ENCODE measurements at regions of chr1 and their contacts with region 1.

Region 1: GRCh38 chr1:66271216-66271903 is 262.6 kb upstream of the SGIP1 start:
- DNase-seq: peak; percentile 88
- H3K4me3 ChIP-seq: peak overlapping the region; percentile 37
- H3K27ac ChIP-seq: peak overlapping the region; percentile 82
- H3K4me1 ChIP-seq: peaks cover 60% of the 10 kb centered on the region
- CTCF ChIP-seq: no peak

Region 2: GRCh38 chr1:65289449-65289848 is 981.9 kb before region 1 on chr1:
- CTCF ChIA-PET with region 1: no interaction called
- POLR2A ChIA-PET with region 1: interaction called, 3 read pairs
- intact Hi-C with region 1: loop called (anchors 10 kb)
- DNase-seq: no peak
- H3K4me3 ChIP-seq: no peak overlapping the region
- H3K27ac ChIP-seq: no peak overlapping the region
- H3K4me1 ChIP-seq: no peaks in the 10 kb centered on the region
- CTCF ChIP-seq: no peak

Region 3: GRCh38 chr1:65317866-65318653 is 953.3 kb before region 1 on chr1:
- CTCF ChIA-PET with region 1: interaction called, 13 read pairs
- POLR2A ChIA-PET with region 1: interaction called, 3 read pairs
- intact Hi-C with region 1: no loop called
- DNase-seq: no peak
- H3K4me3 ChIP-seq: no peak overlapping the region
- H3K27ac ChIP-seq: no peak overlapping the region
- H3K4me1 ChIP-seq: no peaks in the 10 kb centered on the region
- CTCF ChIP-seq: no peak

Region 4: GRCh38 chr1:65419681-65420589 is 851.4 kb before region 1 on chr1:
- CTCF ChIA-PET with region 1: no interaction called
- POLR2A ChIA-PET with region 1: no interaction called
- intact Hi-C with region 1: loop called (anchors 5 kb)
- DNase-seq: peak; percentile 97
- H3K4me3 ChIP-seq: peak overlapping the region; percentile 92
- H3K27ac ChIP-seq: peak overlapping the region; percentile 63
- H3K4me1 ChIP-seq: peaks cover 20% of the 10 kb centered on the region
- CTCF ChIP-seq: no peak

Region 5: DNA sequence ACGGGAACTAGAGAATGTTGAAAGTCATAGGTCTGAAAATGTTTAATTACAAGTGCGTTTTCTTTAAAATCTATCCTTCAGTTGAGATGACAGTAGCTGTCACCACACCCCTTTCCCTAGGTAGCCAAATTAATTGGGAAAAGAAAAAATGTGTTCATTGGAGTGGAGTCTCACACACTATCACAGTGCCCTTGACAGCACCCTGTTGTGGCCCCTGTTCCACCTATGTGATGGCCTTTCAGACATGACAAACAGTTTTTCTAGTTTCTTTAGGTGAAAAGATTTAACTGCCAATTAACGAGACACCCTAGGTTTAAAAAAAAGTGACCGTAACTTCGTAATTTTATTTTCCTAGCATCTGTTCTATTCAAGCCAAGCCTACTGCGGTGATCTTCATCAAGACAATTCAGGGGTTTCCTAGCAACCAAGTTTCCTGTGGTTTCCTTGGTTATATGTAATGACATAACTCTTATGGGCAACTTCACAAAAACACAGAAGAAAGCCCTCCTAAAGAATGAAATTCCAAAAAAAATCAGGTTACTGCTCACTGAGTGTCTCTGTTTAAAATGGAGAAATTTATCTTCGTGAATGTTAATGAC is 180.4 kb before region 1 on chr1:
- CTCF ChIA-PET with region 1: no interaction called
- POLR2A ChIA-PET with region 1: no interaction called
- intact Hi-C with region 1: no loop called
- DNase-seq: no peak
- H3K4me3 ChIP-seq: no peak overlapping the region
- H3K27ac ChIP-seq: no peak overlapping the region
- H3K4me1 ChIP-seq: no peaks in the 10 kb centered on the region
- CTCF ChIP-seq: no peak

Region 6: GRCh38 chr1:66207484-66207883 is 63.9 kb before region 1 on chr1:
- CTCF ChIA-PET with region 1: no interaction called
- POLR2A ChIA-PET with region 1: no interaction called
- intact Hi-C with region 1: no loop called
- DNase-seq: no peak
- H3K4me3 ChIP-seq: no peak overlapping the region
- H3K27ac ChIP-seq: no peak overlapping the region
- H3K4me1 ChIP-seq: no peaks in the 10 kb centered on the region
- CTCF ChIP-seq: no peak

Region 7: DNA sequence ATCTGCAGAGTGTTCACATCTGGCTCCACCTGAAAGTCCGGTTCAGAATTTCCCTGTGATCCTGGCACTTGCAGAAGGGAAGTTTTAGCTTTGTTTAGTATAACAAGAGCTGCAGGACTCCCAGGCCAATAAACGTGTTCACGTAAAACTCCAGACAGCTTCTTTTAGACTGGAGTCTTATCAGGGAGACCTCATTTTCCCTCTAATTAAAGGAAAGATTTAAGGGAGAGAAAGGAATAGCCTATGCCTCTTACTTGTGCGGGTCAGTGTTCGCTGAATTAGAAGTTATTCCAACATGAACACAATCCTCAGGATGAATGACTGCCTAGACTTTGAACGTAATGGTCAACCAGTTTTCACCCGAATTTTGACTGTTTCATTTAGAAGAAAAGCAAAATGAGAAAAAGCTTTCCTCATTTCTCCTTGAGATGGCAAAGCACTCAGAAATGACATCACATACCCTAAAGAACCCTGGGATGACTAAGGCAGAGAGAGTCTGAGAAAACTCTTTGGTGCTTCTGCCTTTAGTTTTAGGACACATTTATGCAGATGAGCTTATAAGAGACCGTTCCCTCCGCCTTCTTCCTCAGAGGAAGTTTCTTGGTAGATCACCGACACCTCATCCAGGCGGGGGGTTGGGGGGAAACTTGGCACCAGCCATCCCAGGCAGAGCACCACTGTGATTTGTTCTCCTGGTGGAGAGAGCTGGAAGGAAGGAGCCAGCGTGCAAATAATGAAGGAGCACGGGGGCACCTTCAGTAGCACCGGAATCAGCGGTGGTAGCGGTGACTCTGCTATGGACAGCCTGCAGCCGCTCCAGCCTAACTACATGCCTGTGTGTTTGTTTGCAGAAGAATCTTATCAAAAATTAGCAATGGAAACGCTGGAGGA is 60.5 kb after region 1 on chr1:
- CTCF ChIA-PET with region 1: interaction called, 4 read pairs
- POLR2A ChIA-PET with region 1: interaction called, 17 read pairs
- intact Hi-C with region 1: loop called (anchors 1 kb)
- DNase-seq: peak; percentile 61
- H3K4me3 ChIP-seq: peak overlapping the region; percentile 77
- H3K27ac ChIP-seq: peak overlapping the region; percentile 93
- H3K4me1 ChIP-seq: peaks cover 71% of the 10 kb centered on the region
- CTCF ChIP-seq: no peak

Measured in OCI-LY7 (cell line).